K562 (cell line): ENCODE measurements at regions of chr10 and their contacts with region 1.

Region 1: DNA sequence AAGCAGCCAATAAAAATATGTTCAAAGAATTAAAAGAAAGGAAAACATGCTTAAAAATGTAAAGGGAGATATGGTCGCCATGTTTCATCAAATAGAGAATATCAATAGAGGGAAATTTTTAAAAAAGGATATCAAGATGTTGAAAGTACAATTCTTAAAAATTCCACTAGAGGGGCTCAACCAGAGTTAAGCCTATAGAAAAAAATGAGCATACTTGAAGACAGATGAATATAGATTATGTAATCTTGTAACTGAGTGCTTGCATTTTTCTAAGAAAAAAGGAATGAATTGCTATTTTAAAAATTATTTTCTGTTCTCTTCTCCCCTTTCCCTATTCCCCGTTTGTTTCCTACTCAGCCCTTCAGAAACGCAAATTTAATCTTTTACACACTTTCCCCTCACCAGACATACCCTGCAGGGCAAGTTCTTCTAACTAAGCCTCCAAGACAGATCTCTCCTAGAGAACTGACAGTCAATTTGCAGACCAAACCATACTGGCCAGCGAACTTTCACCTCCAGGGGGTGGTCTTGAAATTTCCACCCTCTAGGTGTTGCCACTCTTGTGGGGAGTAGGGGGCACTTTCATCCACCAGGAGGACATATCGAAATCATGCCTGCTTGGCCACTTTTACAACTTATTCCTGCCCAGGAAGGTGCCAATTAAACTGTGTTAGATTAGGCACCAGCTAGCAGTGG is 67.7 kb downstream of the NSUN6 start:
- DNase-seq: peak in 1 of 4 experiments; percentile 11
- ATAC-seq: peak; percentile 78
- H3K4me3 ChIP-seq: no peak overlapping the region
- H3K27ac ChIP-seq: peak overlapping the region; percentile 73; the same call in 1 of the 3 replicates
- H3K4me1 ChIP-seq: peaks cover 5 to 25% of the 10 kb centered on the region in 2 experiments; a peak in 4 of 5 replicates
- H3K27me3 ChIP-seq: no peaks in the 10 kb centered on the region
- CTCF ChIP-seq: peak in 1 of 3 experiments; percentile 40; a peak in 2 of 6 replicates
- EP300 ChIP-seq: no peak
- POLR2A ChIP-seq: no peak
- RAD21 ChIP-seq: peak; percentile 11; a peak in 1 of 4 replicates

Region 2: DNA sequence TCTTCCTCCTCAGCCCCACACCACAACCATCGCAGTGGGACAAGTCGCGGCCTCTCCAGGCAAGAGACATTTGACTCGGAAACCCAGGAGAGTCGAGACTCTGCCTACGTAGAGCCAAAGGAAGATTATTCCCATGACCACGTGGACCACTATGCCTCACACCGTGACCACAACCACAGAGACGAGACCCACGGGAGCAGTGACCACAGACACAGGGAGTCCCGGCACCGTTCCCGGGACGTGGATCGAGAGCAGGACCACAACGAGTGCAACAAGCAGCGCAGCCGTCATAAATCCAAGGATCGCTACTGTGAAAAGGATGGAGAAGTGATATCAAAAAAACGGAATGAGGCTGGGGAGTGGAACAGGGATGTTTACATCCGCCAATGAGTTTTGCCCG is 44.4 kb before region 1 on chr10:
- CTCF ChIA-PET with region 1: no interaction called
- POLR2A ChIA-PET with region 1: no interaction called
- in situ Hi-C with region 1: loop called (anchors 5 kb)
- intact Hi-C with region 1: no loop called
- DNase-seq: no peak
- ATAC-seq: no peak
- H3K4me3 ChIP-seq: no peak overlapping the region
- H3K27ac ChIP-seq: no peak overlapping the region
- H3K4me1 ChIP-seq: no peaks in the 10 kb centered on the region
- H3K27me3 ChIP-seq: no peaks in the 10 kb centered on the region
- CTCF ChIP-seq: no peak
- EP300 ChIP-seq: no peak
- POLR2A ChIP-seq: no peak
- RAD21 ChIP-seq: no peak

Region 3: GRCh38 chr10:18571780-18572179 is 11.9 kb before region 1 on chr10:
- CTCF ChIA-PET with region 1: no interaction called
- POLR2A ChIA-PET with region 1: no interaction called
- in situ Hi-C with region 1: no loop called
- intact Hi-C with region 1: no loop called
- DNase-seq: no peak
- ATAC-seq: no peak
- H3K4me3 ChIP-seq: no peak overlapping the region
- H3K27ac ChIP-seq: no peak overlapping the region
- H3K4me1 ChIP-seq: no peaks in the 10 kb centered on the region
- H3K27me3 ChIP-seq: no peaks in the 10 kb centered on the region
- CTCF ChIP-seq: no peak
- EP300 ChIP-seq: no peak
- POLR2A ChIP-seq: no peak
- RAD21 ChIP-seq: no peak

Region 4: GRCh38 chr10:18651324-18652007 is 67.7 kb after region 1 on chr10 and contains the start of gene NSUN6:
- CTCF ChIA-PET with region 1: no interaction called
- POLR2A ChIA-PET with region 1: no interaction called
- in situ Hi-C with region 1: no loop called
- intact Hi-C with region 1: loop called (anchors 1 kb)
- DNase-seq: peak; percentile 88 to 95 (median 89)
- ATAC-seq: peak; percentile 88
- H3K4me3 ChIP-seq: peak within 1 kb of the TSS; percentile 69
- H3K27ac ChIP-seq: peak within 1 kb of the TSS; percentile 92
- H3K4me1 ChIP-seq: peaks cover 0 to 7% of the 10 kb centered on the region in 2 experiments; a peak in 2 of 5 replicates
- H3K27me3 ChIP-seq: no peaks in the 10 kb centered on the region
- CTCF ChIP-seq: peak in 1 of 3 experiments; percentile 12; a peak in 1 of 6 replicates
- EP300 ChIP-seq: peak; percentile 61
- POLR2A ChIP-seq: peak; percentile 91
- RAD21 ChIP-seq: no peak; a peak in 1 of 4 replicates
- polyA plus RNA-seq, gene NSUN6: 12.5 to 19.1 TPM

Region 5: GRCh38 chr10:18860631-18861240 is 277.0 kb after region 1 on chr10:
- CTCF ChIA-PET with region 1: no interaction called
- POLR2A ChIA-PET with region 1: no interaction called
- in situ Hi-C with region 1: no loop called
- intact Hi-C with region 1: no loop called
- DNase-seq: no peak
- ATAC-seq: no peak
- H3K4me3 ChIP-seq: no peak overlapping the region
- H3K27ac ChIP-seq: no peak overlapping the region
- H3K4me1 ChIP-seq: no peaks in the 10 kb centered on the region
- H3K27me3 ChIP-seq: no peaks in the 10 kb centered on the region
- CTCF ChIP-seq: no peak
- EP300 ChIP-seq: no peak
- POLR2A ChIP-seq: no peak
- RAD21 ChIP-seq: no peak